ENCODE measurements at regions of chr12 and their contacts with region 1.

Region 1: GRCh38 chr12:53047221-53048042 is 2.4 kb upstream of the TNS2 start:
- DNase-seq: no peak
- H3K4me3 ChIP-seq: peak overlapping the region; percentile 83
- CTCF ChIP-seq: peak; percentile 19

Region 2: GRCh38 chr12:53005986-53006809 is 41.2 kb before region 1 on chr12 and contains the start of gene EIF4B:
- CTCF ChIA-PET with region 1: no interaction called
- POLR2A ChIA-PET with region 1: interaction called, 11 read pairs
- DNase-seq: peak; percentile 96
- H3K4me3 ChIP-seq: peak within 1 kb of the TSS; percentile 98
- CTCF ChIP-seq: no peak

Region 3: DNA sequence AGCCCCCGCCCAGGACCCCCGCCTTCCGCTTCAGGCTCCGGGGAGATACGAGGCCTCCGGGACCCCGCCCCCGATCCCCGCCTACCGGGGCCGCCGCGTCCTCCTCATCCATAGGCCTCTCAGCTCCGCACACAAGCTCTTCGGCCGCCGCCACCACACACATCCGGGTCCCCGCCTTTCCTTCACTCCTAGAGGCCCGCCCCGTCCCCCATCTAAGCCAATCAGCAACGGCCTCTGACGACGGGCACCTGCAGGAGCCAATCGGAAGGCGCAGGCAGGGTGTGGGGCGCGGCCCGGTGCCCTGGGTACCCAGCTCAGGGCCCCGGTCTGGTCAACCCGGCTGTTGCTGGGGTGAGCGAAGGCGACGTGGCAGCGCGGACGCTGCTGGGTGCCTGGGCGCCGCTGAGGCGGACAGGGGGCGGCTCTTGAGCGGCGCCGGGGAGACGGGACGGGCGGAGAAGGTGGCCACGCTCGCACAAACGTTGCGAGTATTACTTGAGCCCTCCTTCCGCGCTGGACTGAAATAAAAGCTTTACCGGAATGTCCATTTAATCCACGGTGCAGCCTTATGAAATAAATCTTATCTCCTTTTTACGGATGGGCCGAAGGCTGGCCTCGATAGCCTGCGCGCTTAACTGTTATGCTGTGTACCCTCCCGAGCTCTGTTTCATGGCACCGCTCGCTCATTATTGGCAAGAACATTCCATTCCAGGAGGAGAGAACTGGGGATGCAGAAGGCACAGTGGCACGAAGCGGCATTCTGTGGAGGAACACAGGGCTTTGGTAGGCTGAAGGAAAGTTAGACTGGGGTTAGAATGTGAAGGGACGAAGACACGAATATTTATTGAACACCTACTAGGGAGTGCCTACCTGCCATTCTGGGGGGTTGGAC is 32.0 kb after region 1 on chr12 and contains the start of gene SPRYD3:
- CTCF ChIA-PET with region 1: interaction called, 5 read pairs
- POLR2A ChIA-PET with region 1: interaction called, 26 read pairs
- DNase-seq: peak; percentile 80
- H3K4me3 ChIP-seq: peak within 1 kb of the TSS; percentile 76
- CTCF ChIP-seq: no peak

Region 4: DNA sequence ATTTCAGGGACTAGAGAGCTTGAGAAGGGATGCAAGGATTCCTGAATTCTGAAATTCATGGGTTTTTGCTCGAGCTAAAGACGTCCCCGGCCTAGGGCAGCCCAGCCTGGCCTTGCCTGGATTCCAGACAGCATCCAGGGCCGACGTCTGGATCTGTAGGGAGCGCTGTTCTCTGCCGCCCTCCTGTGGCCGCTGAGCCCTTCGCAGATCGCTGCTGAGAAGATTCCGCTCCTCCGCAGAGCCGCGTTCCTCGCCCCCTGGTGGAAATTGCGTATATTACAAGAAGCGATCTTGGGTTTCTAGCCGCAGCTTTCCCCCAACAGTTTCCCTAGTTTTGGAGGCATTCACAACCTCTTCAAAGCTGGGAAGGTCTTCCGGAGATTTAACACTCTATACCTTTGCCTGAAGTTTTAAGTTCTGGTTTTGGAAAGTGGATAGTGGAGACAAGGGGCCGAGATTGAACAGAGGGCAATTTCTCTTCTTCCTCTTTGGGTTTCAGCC is 699.2 kb after region 1 on chr12:
- CTCF ChIA-PET with region 1: no interaction called
- POLR2A ChIA-PET with region 1: no interaction called
- DNase-seq: no peak
- H3K4me3 ChIP-seq: no peak overlapping the region
- CTCF ChIP-seq: peak; percentile 100

Measured in AG04449 (cell line).